A549 (cell line): ENCODE measurements at regions of chr10 and their contacts with region 1.

Region 1: DNA sequence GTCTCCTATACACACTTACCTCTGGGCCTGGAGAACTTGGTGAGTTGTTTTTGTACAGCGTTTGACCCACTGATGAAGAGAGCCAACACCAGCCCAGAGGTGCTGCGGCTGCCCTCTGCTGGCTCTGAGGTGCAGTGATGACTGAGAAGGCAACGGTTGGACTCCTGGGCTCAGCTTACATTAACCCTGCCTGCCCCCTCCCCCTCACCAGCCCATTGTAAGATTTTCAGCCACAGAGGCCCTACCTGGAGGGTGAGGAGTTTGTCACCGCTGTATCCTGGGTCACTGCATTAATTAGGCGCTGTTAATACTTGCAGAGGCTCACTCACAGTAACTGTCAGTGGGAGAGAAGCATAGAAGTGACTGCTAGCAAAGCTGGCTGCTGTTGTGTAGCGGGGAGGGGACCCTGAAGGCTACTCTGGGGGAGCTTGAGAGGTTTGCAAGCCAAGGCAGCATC is 19.0 kb upstream of the ANKRD2 start:
- DNase-seq: peak; percentile 74 to 76
- ATAC-seq: peak; percentile 98 to 100
- H3K4me3 ChIP-seq: no peak overlapping the region
- H3K27ac ChIP-seq: peak overlapping the region in 1 of 2 experiments; percentile 66; a peak in 3 of 6 replicates
- H3K4me1 ChIP-seq: peaks cover 8% of the 10 kb centered on the region
- CTCF ChIP-seq: peak; percentile 86
- EP300 ChIP-seq: no peak
- POLR2A ChIP-seq: no peak
- RAD21 ChIP-seq: peak; percentile 89 to 91

Region 2: DNA sequence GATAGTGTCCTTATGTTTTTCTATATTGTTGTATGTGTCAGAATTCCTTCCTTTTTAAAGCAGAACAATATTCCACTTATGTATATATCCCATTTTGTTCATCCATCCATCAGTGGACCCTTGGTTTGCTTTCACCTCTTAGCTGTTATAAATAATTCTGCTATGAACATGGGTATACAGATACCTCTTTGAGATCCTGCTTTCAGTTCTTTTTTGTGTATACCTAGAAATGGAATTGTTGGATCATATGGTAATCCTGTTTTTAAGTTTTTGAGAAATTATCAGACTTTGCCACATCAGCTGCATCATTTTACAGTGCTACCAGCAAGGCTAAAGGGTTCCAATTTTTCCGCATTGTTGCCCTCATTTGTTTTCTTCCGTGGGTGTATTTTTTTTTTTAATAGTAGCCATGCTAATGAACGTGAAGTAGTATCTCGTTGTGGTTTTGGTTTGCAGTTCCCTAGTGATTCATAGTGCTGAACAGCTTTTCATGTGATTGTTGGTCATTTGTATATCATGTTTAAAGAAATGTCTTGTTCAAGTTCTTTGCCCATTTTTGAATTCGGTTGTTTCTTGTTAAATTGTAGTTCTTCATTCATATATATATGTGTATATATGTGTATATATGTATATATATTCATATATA is 633.7 kb before region 1 on chr10:
- CTCF ChIA-PET with region 1: no interaction called
- POLR2A ChIA-PET with region 1: no interaction called
- DNase-seq: no peak
- ATAC-seq: no peak
- H3K4me3 ChIP-seq: no peak overlapping the region
- H3K27ac ChIP-seq: no peak overlapping the region
- H3K4me1 ChIP-seq: no peaks in the 10 kb centered on the region
- CTCF ChIP-seq: no peak
- EP300 ChIP-seq: no peak
- POLR2A ChIP-seq: no peak
- RAD21 ChIP-seq: no peak

Region 3: GRCh38 chr10:97454330-97455036 is 99.1 kb before region 1 on chr10:
- CTCF ChIA-PET with region 1: interaction called, 218 read pairs
- POLR2A ChIA-PET with region 1: no interaction called
- DNase-seq: no peak
- ATAC-seq: peak in 1 of 2 experiments; percentile 16; a peak in 1 of 6 replicates
- H3K4me3 ChIP-seq: no peak overlapping the region
- H3K27ac ChIP-seq: no peak overlapping the region
- H3K4me1 ChIP-seq: no peaks in the 10 kb centered on the region
- CTCF ChIP-seq: no peak
- EP300 ChIP-seq: no peak
- POLR2A ChIP-seq: no peak
- RAD21 ChIP-seq: no peak

Region 4: DNA sequence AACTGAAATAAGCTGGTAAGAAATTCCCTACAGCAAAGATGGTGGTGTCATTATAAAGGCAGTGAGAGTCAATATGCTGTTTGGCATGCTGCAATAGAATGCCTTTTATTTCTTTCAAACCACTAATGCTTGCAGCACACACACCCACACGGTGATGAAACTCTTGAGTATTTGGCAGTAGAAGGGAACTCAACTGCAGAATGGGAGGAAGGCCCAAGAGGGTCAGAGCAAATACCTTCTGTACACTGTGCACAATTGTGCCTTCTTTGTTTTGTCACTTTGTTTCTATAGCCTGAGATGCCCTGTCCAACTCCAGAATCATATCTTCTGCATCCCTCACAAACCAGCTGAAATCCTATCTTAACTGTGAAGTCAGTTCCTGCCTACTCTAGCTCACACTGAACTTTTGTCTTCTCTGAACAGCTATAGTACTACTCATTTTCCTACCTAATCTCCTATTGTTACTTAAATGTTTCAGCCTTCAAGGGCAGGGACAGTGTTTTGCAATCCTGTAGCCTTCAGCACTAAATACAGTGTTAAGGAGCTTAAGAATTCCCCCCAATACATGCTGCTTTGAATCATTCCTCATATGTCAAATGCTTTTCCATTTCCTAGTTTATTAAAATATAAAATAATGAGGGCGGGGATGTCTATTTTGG is 77.5 kb before region 1 on chr10:
- CTCF ChIA-PET with region 1: interaction called, 28 read pairs
- POLR2A ChIA-PET with region 1: no interaction called
- DNase-seq: no peak
- ATAC-seq: no peak; a peak in 1 of 6 replicates
- H3K4me3 ChIP-seq: no peak overlapping the region
- H3K27ac ChIP-seq: no peak overlapping the region
- H3K4me1 ChIP-seq: peaks cover 7% of the 10 kb centered on the region; the same call in 2 of the 3 replicates
- CTCF ChIP-seq: no peak
- EP300 ChIP-seq: no peak
- POLR2A ChIP-seq: no peak
- RAD21 ChIP-seq: no peak

Region 5: DNA sequence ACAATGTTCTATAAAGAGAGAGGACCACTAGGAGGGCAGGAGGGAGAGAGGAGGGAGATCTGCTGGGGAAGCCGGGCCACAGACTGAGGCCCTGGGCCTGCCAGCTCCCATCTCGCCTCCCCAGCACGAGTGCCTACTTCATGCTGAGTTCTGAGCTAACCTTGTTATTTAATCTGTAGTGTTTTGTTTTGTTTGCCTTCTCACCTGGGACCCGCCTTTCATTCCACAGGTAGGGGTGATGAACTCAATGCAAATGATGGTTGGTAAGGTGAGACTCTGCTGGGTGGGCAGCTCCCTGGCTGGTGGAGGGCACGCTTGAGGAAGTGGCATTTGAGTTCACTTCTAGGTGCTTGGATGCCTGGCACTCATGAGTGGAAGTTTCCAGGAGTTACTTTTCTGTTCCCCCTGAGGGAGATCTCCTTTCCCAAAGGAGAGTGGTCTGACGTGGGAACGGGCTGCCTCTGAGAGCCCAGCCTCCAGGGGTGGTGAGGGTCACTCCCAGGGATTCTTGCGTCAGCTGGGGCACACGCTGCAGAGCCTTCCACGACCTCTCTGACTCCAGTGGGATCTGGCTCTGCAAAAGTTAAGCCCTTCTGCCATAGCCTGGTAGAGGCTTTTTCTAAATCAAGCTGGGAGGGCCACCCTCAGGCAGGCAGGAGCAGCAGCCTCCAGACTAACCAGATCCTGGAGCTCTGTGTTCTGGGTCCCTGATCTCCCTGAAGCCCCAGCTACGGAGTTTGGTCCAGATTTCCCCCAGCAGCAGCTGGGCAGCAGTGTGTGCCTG is 32.4 kb before region 1 on chr10:
- CTCF ChIA-PET with region 1: interaction called, 16 read pairs
- POLR2A ChIA-PET with region 1: no interaction called
- DNase-seq: no peak
- ATAC-seq: no peak; a peak in 1 of 6 replicates
- H3K4me3 ChIP-seq: no peak overlapping the region
- H3K27ac ChIP-seq: no peak overlapping the region
- H3K4me1 ChIP-seq: peaks cover 10% of the 10 kb centered on the region; the same call in 2 of the 3 replicates
- CTCF ChIP-seq: no peak
- EP300 ChIP-seq: no peak
- POLR2A ChIP-seq: no peak
- RAD21 ChIP-seq: no peak

Region 6: DNA sequence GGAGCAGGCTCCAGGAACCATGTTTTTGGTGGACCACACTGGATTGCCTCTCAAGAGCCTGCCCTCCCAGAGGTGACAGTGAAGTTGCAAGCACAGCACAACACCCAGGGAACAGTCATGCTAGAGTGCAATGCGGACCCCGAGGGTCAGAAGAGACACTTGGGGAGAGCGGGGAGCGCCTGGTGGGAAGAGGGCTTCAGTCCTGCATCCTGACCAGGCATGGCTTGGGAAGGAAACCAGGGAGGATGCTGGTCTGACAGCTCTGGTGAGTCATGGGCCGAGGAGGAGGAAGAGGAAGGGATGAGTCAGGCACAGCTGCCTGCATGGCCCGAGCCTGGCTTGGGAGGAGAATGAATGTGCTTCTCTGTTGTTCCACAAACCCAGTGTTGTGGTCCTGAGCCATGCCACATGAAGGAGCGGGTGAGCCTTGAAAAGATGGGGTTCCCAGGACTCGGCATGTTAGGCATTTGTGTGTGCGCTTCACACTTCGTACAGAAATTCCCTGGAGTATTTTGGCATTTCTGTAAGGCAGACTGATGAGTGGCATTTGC is 10.5 kb before region 1 on chr10:
- CTCF ChIA-PET with region 1: interaction called, 213 read pairs
- POLR2A ChIA-PET with region 1: no interaction called
- DNase-seq: peak; percentile 76 to 95
- ATAC-seq: peak; percentile 69 to 86
- H3K4me3 ChIP-seq: no peak overlapping the region
- H3K27ac ChIP-seq: peak overlapping the region; percentile 86 to 92
- H3K4me1 ChIP-seq: peaks cover 57% of the 10 kb centered on the region
- CTCF ChIP-seq: no peak
- EP300 ChIP-seq: no peak
- POLR2A ChIP-seq: no peak
- RAD21 ChIP-seq: no peak

Region 7: GRCh38 chr10:97572214-97572989 is 18.8 kb after region 1 on chr10 and contains the start of gene ANKRD2:
- CTCF ChIA-PET with region 1: interaction called, 131 read pairs
- POLR2A ChIA-PET with region 1: no interaction called
- DNase-seq: peak; percentile 81 to 86
- ATAC-seq: peak; percentile 72 to 79
- H3K4me3 ChIP-seq: no peak within 1 kb of the TSS
- H3K27ac ChIP-seq: peak within 1 kb of the TSS; percentile 91 to 93
- H3K4me1 ChIP-seq: peaks cover 63% of the 10 kb centered on the region
- CTCF ChIP-seq: peak; percentile 93
- EP300 ChIP-seq: no peak
- POLR2A ChIP-seq: no peak
- RAD21 ChIP-seq: peak; percentile 95 to 96
- polyA plus RNA-seq, gene ANKRD2: 0.90 and 1.5 TPM in 2 replicates

Region 8: GRCh38 chr10:97612386-97612785 is 58.8 kb after region 1 on chr10:
- CTCF ChIA-PET with region 1: interaction called, 64 read pairs
- POLR2A ChIA-PET with region 1: no interaction called
- DNase-seq: peak; percentile 70 to 85
- ATAC-seq: peak; percentile 97 to 98
- H3K4me3 ChIP-seq: no peak overlapping the region
- H3K27ac ChIP-seq: peak overlapping the region; percentile 13 to 75; a peak in 4 of 6 replicates
- H3K4me1 ChIP-seq: peaks cover 17% of the 10 kb centered on the region; the same call in 2 of the 3 replicates
- CTCF ChIP-seq: peak; percentile 85
- EP300 ChIP-seq: no peak
- POLR2A ChIP-seq: no peak
- RAD21 ChIP-seq: peak; percentile 95 to 98